MCF 10A (cell line): ENCODE measurements at regions of chr1 and their contacts with region 1.

Region 1: DNA sequence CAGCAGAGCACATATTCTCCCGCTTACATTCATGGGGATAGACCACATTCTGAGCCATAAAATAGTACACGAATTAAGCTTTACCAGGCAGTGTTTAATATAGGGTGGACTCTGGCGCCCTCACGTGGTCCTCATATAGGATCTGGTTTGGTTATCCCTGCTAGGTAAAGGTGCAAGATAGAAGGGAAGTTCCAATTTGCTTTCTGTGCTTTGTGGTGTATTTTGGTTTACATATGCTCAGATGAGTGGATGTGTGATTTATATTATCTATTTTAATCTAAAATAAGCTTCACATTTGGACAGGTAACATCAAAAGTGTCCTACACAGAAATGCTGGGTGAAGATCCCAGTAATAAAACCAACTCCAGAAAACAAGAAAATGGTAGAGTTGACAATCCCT is 3.6 kb downstream of the CR1 start:
- DNase-seq: peak; percentile 90
- H3K4me3 Mint-ChIP-seq: no peak overlapping the region
- H3K27ac Mint-ChIP-seq: no peak overlapping the region
- H3K4me1 Mint-ChIP-seq: peaks cover 6% of the 10 kb centered on the region
- H3K27me3 Mint-ChIP-seq: peaks cover 68% of the 10 kb centered on the region
- CTCF ChIP-seq: peak; percentile 97

Region 2: DNA sequence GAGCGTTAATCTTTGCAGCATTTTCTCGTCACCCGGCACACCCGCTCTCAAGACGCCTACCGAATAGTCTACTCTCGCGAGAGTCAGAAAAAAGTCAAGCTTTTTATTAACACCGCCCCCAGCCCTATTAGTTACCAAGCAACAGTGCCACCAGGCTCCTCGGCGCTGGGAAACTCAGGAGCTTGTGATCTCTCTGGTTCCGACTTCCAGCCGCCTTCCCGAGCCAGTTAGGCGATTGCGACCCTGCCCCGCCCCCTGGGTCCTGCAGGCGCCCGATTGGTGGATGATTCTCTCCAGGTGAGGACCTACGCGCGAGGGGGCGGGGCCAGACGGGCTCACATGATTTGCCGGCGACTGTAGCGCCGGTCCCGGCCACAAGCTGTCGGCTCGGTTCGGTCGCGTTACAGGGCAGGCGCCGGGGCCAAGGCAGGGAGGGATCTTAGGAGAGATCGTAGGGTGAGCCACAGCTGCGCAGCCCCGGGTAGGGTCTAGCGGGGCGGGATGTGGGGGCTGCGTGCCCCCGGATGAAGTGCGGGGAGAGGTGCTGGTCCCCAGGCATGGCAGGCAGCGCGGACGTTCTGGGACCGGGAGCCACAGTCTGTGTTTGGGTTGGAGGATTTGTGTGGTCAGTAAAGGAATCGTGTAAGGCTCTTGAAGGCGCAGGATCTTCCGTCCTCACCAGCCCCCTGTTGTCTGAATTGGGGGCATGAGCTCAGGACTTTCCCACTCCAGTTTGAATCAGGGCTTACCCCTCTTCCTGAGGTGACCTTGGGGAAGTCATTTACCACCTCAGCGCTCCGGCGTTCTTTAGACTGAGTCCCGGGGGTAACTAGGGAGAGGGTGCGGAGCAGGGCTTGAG is 446.4 kb before region 1 on chr1 and contains the start of gene PFKFB2:
- CTCF ChIA-PET with region 1: interaction called, 11 read pairs
- POLR2A ChIA-PET with region 1: interaction called, 4 read pairs
- intact Hi-C with region 1: no loop called
- DNase-seq: peak; percentile 100
- H3K4me3 Mint-ChIP-seq: peak within 1 kb of the TSS; percentile 89
- H3K27ac Mint-ChIP-seq: peak within 1 kb of the TSS; percentile 95
- H3K4me1 Mint-ChIP-seq: peaks cover 51% of the 10 kb centered on the region
- H3K27me3 Mint-ChIP-seq: no peaks in the 10 kb centered on the region
- CTCF ChIP-seq: peak; percentile 24
- total RNA-seq, gene PFKFB2: 21.1 and 22.0 TPM in 2 replicates

Region 3: GRCh38 chr1:207181838-207182237 is 317.7 kb before region 1 on chr1:
- CTCF ChIA-PET with region 1: interaction called, 13 read pairs
- POLR2A ChIA-PET with region 1: interaction called, 5 read pairs
- intact Hi-C with region 1: loop called (anchors 1 kb)
- DNase-seq: peak; percentile 66
- H3K4me3 Mint-ChIP-seq: no peak overlapping the region
- H3K27ac Mint-ChIP-seq: no peak overlapping the region
- H3K4me1 Mint-ChIP-seq: no peaks in the 10 kb centered on the region
- H3K27me3 Mint-ChIP-seq: no peaks in the 10 kb centered on the region
- CTCF ChIP-seq: peak; percentile 84

Region 4: GRCh38 chr1:207277241-207277640 is 222.3 kb before region 1 on chr1:
- CTCF ChIA-PET with region 1: no interaction called
- POLR2A ChIA-PET with region 1: no interaction called
- intact Hi-C with region 1: no loop called
- DNase-seq: no peak
- H3K4me3 Mint-ChIP-seq: no peak overlapping the region
- H3K27ac Mint-ChIP-seq: no peak overlapping the region
- H3K4me1 Mint-ChIP-seq: peaks cover 6% of the 10 kb centered on the region
- H3K27me3 Mint-ChIP-seq: no peaks in the 10 kb centered on the region
- CTCF ChIP-seq: no peak

Region 5: DNA sequence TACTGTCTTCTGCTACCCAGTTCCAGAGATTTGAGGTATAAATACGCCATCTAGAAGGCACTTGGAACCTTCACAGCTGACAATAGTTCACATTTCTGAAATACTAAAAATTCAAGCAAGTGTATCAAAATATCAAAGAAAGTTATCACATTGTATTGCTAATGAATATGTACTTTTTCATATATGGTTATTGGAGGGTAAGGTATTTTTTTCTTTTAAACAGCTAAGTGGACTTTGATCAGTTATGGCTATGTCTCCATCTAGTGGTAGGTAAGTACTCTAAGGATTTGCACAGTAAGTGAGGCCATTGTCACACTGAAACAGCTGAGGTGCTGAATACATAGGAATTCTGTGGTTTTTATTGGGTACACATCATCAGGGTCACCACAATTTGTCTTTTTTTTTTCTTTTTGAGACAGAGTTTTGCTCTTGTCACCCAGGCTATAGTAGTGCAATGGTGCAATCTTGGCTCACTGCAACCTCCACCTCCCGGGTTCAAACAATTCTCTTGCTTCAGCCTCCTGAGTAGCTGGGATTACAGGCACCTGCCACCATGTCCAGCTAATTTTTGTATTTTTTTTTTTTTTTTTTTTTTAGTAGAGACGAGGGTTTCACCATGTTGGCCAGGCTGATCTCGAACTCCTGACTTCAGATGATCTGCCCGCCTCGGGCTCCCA is 94.6 kb before region 1 on chr1:
- CTCF ChIA-PET with region 1: interaction called, 41 read pairs
- POLR2A ChIA-PET with region 1: interaction called, 4 read pairs
- intact Hi-C with region 1: loop called (anchors 1 kb)
- DNase-seq: peak; percentile 83
- H3K4me3 Mint-ChIP-seq: no peak overlapping the region
- H3K27ac Mint-ChIP-seq: no peak overlapping the region
- H3K4me1 Mint-ChIP-seq: peaks cover 5% of the 10 kb centered on the region
- H3K27me3 Mint-ChIP-seq: no peaks in the 10 kb centered on the region
- CTCF ChIP-seq: peak; percentile 99

Region 6: DNA sequence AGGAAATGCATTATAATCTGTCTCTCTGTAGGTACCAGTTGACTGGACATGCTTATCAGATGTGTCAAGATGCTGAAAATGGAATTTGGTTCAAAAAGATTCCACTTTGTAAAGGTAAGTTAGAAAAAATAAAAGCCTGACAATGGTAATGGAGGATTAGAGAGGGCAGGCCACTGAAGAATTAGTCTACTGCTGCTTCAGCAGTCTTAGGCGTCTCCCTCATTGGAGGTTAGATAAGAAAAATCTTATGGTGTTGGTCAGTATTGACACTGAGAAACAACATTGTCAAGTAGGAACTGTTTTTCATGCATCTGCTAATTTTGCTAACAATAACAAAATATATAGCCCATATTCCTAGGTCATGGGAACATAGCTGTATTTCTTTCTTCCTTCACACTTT is 25.4 kb before region 1 on chr1:
- CTCF ChIA-PET with region 1: interaction called, 15 read pairs
- POLR2A ChIA-PET with region 1: no interaction called
- intact Hi-C with region 1: no loop called
- DNase-seq: no peak
- H3K4me3 Mint-ChIP-seq: no peak overlapping the region
- H3K27ac Mint-ChIP-seq: no peak overlapping the region
- H3K4me1 Mint-ChIP-seq: no peaks in the 10 kb centered on the region
- H3K27me3 Mint-ChIP-seq: peaks cover 84% of the 10 kb centered on the region
- CTCF ChIP-seq: no peak

Region 7: DNA sequence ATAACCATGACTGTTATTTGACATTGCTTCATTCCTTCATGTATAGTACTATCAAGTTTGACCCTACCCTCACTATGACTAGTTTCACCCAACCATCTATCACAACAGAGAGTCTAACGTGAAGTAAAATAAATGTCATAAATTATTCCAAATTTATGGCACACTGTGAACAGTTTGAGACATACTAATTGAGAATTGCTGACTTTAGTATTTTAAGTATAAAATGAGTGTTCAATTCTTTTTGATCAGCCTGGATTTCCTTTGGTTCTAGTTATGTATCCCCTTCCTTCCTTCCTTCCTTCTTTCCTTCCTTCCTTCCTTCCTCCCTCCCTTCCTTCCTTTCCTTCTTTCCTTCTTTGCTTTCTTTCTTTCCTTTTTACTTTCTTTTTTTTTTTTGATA is 10.9 kb after region 1 on chr1:
- CTCF ChIA-PET with region 1: interaction called, 16 read pairs
- POLR2A ChIA-PET with region 1: no interaction called
- intact Hi-C with region 1: no loop called
- DNase-seq: no peak
- H3K4me3 Mint-ChIP-seq: no peak overlapping the region
- H3K27ac Mint-ChIP-seq: no peak overlapping the region
- H3K4me1 Mint-ChIP-seq: no peaks in the 10 kb centered on the region
- H3K27me3 Mint-ChIP-seq: peaks cover 71% of the 10 kb centered on the region
- CTCF ChIP-seq: no peak

Region 8: GRCh38 chr1:207672522-207673130 is 173.1 kb after region 1 on chr1:
- CTCF ChIA-PET with region 1: interaction called, 3 read pairs
- POLR2A ChIA-PET with region 1: no interaction called
- intact Hi-C with region 1: loop called (anchors 5 kb)
- DNase-seq: peak; percentile 86
- H3K4me3 Mint-ChIP-seq: no peak overlapping the region
- H3K27ac Mint-ChIP-seq: no peak overlapping the region
- H3K4me1 Mint-ChIP-seq: peaks cover 12% of the 10 kb centered on the region
- H3K27me3 Mint-ChIP-seq: peaks cover 75% of the 10 kb centered on the region
- CTCF ChIP-seq: peak; percentile 90

Region 9: DNA sequence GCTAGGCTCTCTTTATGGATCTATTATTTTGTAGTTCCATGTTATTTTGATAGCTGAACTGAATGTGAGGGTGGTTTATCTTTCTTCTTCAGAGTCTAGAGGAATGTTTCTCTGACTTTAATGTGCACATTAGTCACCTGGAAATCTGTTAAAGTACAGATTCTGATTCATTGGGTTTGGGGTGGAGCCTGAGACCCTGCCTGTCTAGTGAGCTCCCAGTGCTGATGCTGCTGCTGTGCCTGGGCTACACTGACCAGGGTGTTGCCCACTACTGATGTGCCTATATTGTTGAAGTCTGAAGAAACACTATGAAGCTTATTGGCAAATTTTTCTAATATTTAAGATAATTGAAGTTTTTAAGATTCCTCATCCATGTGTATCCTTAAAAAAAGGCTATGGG is 288.2 kb after region 1 on chr1:
- CTCF ChIA-PET with region 1: no interaction called
- POLR2A ChIA-PET with region 1: no interaction called
- intact Hi-C with region 1: no loop called
- DNase-seq: no peak
- H3K4me3 Mint-ChIP-seq: no peak overlapping the region
- H3K27ac Mint-ChIP-seq: no peak overlapping the region
- H3K4me1 Mint-ChIP-seq: peaks cover 15% of the 10 kb centered on the region
- H3K27me3 Mint-ChIP-seq: no peaks in the 10 kb centered on the region
- CTCF ChIP-seq: no peak